Prostate gland (tissue), 2 donors: ENCODE measurements at regions of chr10 and their contacts with region 1.

Region 1: GRCh38 chr10:118046395-118047156 is at the start of gene RAB11FIP2:
- DNase-seq: peak; percentile 94
- H3K4me3 ChIP-seq: peak within 1 kb of the TSS; percentile 51 to 71
- H3K27ac ChIP-seq: peak within 1 kb of the TSS; percentile 79 to 90
- H3K4me1 ChIP-seq: no peaks in the 10 kb centered on the region
- H3K27me3 ChIP-seq: no peaks in the 10 kb centered on the region
- CTCF ChIP-seq: no peak
- POLR2A ChIP-seq: peak; percentile 59
- total RNA-seq, gene RAB11FIP2: 14.3 to 33.5 TPM

Region 2: DNA sequence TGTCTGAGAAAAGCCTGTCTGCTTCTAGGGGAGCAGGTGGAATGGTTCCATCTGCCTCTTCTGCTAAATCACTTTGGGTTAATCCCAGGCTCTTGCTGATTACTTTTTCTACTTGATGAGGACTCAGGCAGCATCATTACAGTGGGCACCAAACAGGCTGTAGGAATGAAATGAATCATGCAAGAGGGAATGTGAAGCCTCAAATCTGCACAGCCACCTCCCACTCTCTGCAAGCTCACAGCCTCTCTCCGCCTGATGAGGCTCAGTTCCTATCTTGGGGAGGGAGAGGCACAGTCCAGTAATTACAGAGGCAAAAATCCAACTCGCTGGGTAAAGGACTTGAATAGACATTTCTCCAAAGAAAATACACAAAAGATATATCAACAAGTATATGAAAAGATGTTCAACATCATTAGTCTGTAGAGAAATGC is 1338.2 kb before region 1 on chr10:
- intact Hi-C with region 1: no loop called
- DNase-seq: no peak
- H3K4me3 ChIP-seq: no peak overlapping the region
- H3K27ac ChIP-seq: no peak overlapping the region
- H3K4me1 ChIP-seq: no peaks in the 10 kb centered on the region
- H3K27me3 ChIP-seq: no peaks in the 10 kb centered on the region
- CTCF ChIP-seq: no peak
- POLR2A ChIP-seq: no peak

Region 3: GRCh38 chr10:117461766-117462423 is 584.7 kb before region 1 on chr10:
- intact Hi-C with region 1: loop called (anchors 10 kb)
- DNase-seq: peak; percentile 81
- H3K4me3 ChIP-seq: no peak overlapping the region
- H3K27ac ChIP-seq: peak overlapping the region; percentile 2 to 50
- H3K4me1 ChIP-seq: no peaks in the 10 kb centered on the region
- H3K27me3 ChIP-seq: no peaks in the 10 kb centered on the region
- CTCF ChIP-seq: no peak
- POLR2A ChIP-seq: peak; percentile 11

Region 4: DNA sequence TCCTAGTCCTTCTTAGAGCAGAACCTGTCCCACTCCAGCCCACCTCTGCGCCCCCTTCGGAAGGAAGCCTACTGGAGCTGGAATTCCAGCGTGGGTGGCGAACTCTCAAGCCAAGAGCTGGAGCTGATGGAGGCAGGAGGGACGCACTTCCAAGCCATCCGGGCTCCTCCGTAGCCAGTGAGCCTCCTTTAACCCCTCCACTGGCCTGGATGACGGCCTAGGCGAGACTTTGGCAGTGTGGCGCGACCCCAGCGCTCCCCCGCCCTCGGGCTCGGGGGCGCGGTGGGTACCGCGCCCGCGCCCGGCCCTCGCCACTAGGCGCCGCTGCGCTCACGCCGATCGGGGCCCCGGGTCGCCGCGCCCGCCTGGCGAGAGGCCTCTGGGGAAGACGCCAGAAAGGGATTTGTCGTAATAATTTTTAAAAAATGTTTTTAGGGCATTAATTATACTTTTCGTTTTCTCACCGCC is 509.1 kb before region 1 on chr10:
- intact Hi-C with region 1: loop called (anchors 10 kb)
- DNase-seq: no peak
- H3K4me3 ChIP-seq: no peak overlapping the region
- H3K27ac ChIP-seq: no peak overlapping the region
- H3K4me1 ChIP-seq: peaks cover 14% of the 10 kb centered on the region
- H3K27me3 ChIP-seq: peaks cover 66% of the 10 kb centered on the region
- CTCF ChIP-seq: peak; percentile 55 to 69 (median 62)
- POLR2A ChIP-seq: no peak

Region 5: GRCh38 chr10:118116715-118117449 is 70.3 kb after region 1 on chr10:
- intact Hi-C with region 1: loop called (anchors 5 kb)
- DNase-seq: peak; percentile 41
- H3K4me3 ChIP-seq: no peak overlapping the region
- H3K27ac ChIP-seq: no peak overlapping the region
- H3K4me1 ChIP-seq: peaks cover 3% of the 10 kb centered on the region
- H3K27me3 ChIP-seq: no peaks in the 10 kb centered on the region
- CTCF ChIP-seq: no peak
- POLR2A ChIP-seq: no peak

Region 6: GRCh38 chr10:118341791-118342637 is 295.4 kb after region 1 on chr10 and contains the start of gene FAM204A:
- intact Hi-C with region 1: loop called (anchors 5 kb)
- DNase-seq: peak; percentile 91
- H3K4me3 ChIP-seq: peak within 1 kb of the TSS; percentile 80 to 84
- H3K27ac ChIP-seq: peak within 1 kb of the TSS; percentile 61 to 71
- H3K4me1 ChIP-seq: no peaks in the 10 kb centered on the region
- H3K27me3 ChIP-seq: no peaks in the 10 kb centered on the region
- CTCF ChIP-seq: no peak
- POLR2A ChIP-seq: peak; percentile 61
- total RNA-seq, gene FAM204A: 35.8 to 57.2 TPM